ENCODE measurements at regions of chr7 and their contacts with region 1.

Region 1: GRCh38 chr7:117127585-117128168 is 174.4 kb downstream of the ST7 start:
- DNase-seq: peak; percentile 77
- H3K4me3 ChIP-seq: no peak overlapping the region
- H3K27ac ChIP-seq: peak overlapping the region; percentile 47; the same call in 1 of the 2 replicates
- H3K4me1 ChIP-seq: peaks cover 86% of the 10 kb centered on the region
- H3K27me3 ChIP-seq: no peaks in the 10 kb centered on the region

Region 2: GRCh38 chr7:116929914-116930913 is 197.5 kb before region 1 on chr7:
- in situ Hi-C with region 1: loop called (anchors 10 kb)
- DNase-seq: peak; percentile 85
- H3K4me3 ChIP-seq: no peak overlapping the region
- H3K27ac ChIP-seq: no peak overlapping the region
- H3K4me1 ChIP-seq: 0 out of 2 replicates have a peak, but pooled peaks cover 2% of the 10 kb centered on the region
- H3K27me3 ChIP-seq: no peaks in the 10 kb centered on the region

Region 3: GRCh38 chr7:116984917-116985316 is 142.8 kb before region 1 on chr7:
- in situ Hi-C with region 1: loop called (anchors 5 kb)
- DNase-seq: peak; percentile 52
- H3K4me3 ChIP-seq: no peak overlapping the region
- H3K27ac ChIP-seq: no peak overlapping the region
- H3K4me1 ChIP-seq: 0 out of 2 replicates have a peak, but pooled peaks cover 11% of the 10 kb centered on the region
- H3K27me3 ChIP-seq: no peaks in the 10 kb centered on the region

Region 4: DNA sequence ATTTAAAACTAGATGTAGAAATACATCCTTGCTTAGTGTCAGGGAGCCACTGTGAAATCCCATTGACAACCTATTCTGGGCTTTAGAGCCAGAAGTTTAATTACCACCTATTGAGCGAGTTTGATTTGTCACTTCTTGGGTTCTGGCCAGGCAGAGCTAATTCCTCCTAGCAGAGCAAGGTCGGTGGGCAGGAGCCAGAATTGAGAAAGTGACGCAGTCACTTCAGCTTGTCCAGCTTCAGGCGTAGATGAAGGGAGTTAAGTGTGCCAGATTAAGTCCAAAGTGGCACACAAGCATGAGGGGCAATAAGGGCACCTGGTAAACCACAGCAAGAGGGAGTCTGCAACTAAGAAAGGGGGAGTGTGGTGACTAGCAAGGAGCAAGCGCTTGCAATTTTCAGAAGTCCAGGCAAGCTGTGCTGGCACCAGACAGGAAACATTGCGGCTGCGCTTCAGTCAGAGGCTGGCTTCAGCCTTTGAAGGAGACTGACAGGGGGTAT is 55.0 kb before region 1 on chr7:
- in situ Hi-C with region 1: no loop called
- DNase-seq: peak; percentile 83
- H3K4me3 ChIP-seq: no peak overlapping the region
- H3K27ac ChIP-seq: peak overlapping the region; percentile 17
- H3K4me1 ChIP-seq: peaks cover 19% of the 10 kb centered on the region
- H3K27me3 ChIP-seq: no peaks in the 10 kb centered on the region

Region 5: GRCh38 chr7:117564080-117564479 is 436.4 kb after region 1 on chr7:
- in situ Hi-C with region 1: no loop called
- DNase-seq: no peak
- H3K4me3 ChIP-seq: no peak overlapping the region
- H3K27ac ChIP-seq: no peak overlapping the region
- H3K4me1 ChIP-seq: no peaks in the 10 kb centered on the region
- H3K27me3 ChIP-seq: no peaks in the 10 kb centered on the region